Activated T-helper 1 cell treated with anti-CD3 and anti-CD28 coated beads, Interleukin-12 subunit alpha, Interleukin-12 subunit beta, Interleukin-2, Interleukin-4 antibody, amounts not matched to agents 30 ng/mL and 10 ng/mL and 1 ng/mL, durations not matched to agents 14 hours and 24 hours and 36 hours (primary cell): ENCODE measurements at regions of chr3 and their contacts with region 1.

Region 1: GRCh38 chr3:16928386-16929132 is 43.8 kb downstream of the PLCL2 start:
- DNase-seq: no peak
- H3K4me3 Mint-ChIP-seq: no peak overlapping the region
- H3K27ac Mint-ChIP-seq: no peak overlapping the region
- H3K4me1 Mint-ChIP-seq: peaks cover 51% of the 10 kb centered on the region
- H3K27me3 Mint-ChIP-seq: no peaks in the 10 kb centered on the region

Region 2: GRCh38 chr3:16866571-16866970 is 62.0 kb before region 1 on chr3:
- intact Hi-C with region 1: no loop called
- DNase-seq: no peak
- H3K4me3 Mint-ChIP-seq: no peak overlapping the region
- H3K27ac Mint-ChIP-seq: no peak overlapping the region
- H3K4me1 Mint-ChIP-seq: peaks cover 11% of the 10 kb centered on the region
- H3K27me3 Mint-ChIP-seq: peaks cover 34% of the 10 kb centered on the region

Region 3: GRCh38 chr3:16942955-16943354 is 14.4 kb after region 1 on chr3:
- intact Hi-C with region 1: loop called (anchors 2 kb)
- DNase-seq: no peak
- H3K4me3 Mint-ChIP-seq: no peak overlapping the region
- H3K27ac Mint-ChIP-seq: no peak overlapping the region
- H3K4me1 Mint-ChIP-seq: peaks cover 29% of the 10 kb centered on the region
- H3K27me3 Mint-ChIP-seq: peaks cover 2% of the 10 kb centered on the region

Region 4: DNA sequence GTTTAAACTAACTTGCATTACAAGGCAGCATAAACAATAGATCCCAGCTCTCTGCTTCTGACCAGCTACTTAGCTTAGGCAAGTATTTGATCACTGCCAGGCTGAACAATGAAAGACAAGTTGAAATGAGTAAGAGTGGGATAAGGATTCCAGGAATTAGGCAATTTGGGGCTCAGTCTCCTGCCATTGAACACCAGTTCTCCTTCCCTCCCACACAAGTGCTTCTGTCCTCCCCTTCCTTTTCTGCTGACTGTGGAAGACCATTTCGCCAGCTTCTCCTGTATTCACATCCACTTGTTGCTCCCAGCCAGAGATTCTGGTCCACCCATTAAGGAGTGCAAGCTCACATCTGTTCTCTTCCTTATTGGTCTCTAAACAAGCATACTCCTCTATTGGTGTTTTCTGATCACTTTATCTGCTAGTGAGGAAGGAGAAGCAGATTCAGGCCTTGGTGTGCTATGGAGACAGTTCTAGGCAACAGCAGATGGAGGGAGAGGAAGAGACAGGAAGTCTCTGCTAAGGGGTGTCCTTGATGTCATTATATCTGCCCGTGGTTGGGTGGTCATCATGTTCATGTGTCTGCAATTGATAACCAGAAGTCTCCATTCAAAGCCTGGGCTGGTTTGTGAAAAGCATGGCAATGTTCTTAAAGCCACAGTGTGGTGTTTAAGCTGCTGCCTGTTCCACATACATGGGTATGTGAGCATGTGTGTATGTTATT is 77.7 kb after region 1 on chr3:
- intact Hi-C with region 1: no loop called
- DNase-seq: no peak
- H3K4me3 Mint-ChIP-seq: no peak overlapping the region
- H3K27ac Mint-ChIP-seq: no peak overlapping the region
- H3K4me1 Mint-ChIP-seq: peaks cover 18% of the 10 kb centered on the region
- H3K27me3 Mint-ChIP-seq: no peaks in the 10 kb centered on the region